Activated CD4-positive, alpha-beta T cell treated with anti-CD3 and anti-CD28 coated beads for 36 hours (primary cell): ENCODE measurements at regions of chr6 and their contacts with region 1.

Region 1: GRCh38 chr6:35894776-35895175 is 26.1 kb downstream of the SRPK1 start:
- DNase-seq: no peak
- ATAC-seq: no peak
- H3K4me3 Mint-ChIP-seq: no peak overlapping the region
- H3K27ac Mint-ChIP-seq: no peak overlapping the region
- H3K4me1 Mint-ChIP-seq: peaks cover 14% of the 10 kb centered on the region
- H3K27me3 Mint-ChIP-seq: no peaks in the 10 kb centered on the region

Region 2: GRCh38 chr6:35776364-35777215 is 118.2 kb before region 1 on chr6 and contains the start of gene CLPSL2:
- CTCF ChIA-PET with region 1: no interaction called
- POLR2A ChIA-PET with region 1: no interaction called
- intact Hi-C with region 1: no loop called
- DNase-seq: peak; percentile 18
- ATAC-seq: peak; percentile 33
- H3K4me3 Mint-ChIP-seq: peak within 1 kb of the TSS; percentile 9
- H3K27ac Mint-ChIP-seq: no peak within 1 kb of the TSS
- H3K4me1 Mint-ChIP-seq: peaks cover 5% of the 10 kb centered on the region
- H3K27me3 Mint-ChIP-seq: peaks cover 23% of the 10 kb centered on the region
- total RNA-seq, gene CLPSL2: not detected

Region 3: DNA sequence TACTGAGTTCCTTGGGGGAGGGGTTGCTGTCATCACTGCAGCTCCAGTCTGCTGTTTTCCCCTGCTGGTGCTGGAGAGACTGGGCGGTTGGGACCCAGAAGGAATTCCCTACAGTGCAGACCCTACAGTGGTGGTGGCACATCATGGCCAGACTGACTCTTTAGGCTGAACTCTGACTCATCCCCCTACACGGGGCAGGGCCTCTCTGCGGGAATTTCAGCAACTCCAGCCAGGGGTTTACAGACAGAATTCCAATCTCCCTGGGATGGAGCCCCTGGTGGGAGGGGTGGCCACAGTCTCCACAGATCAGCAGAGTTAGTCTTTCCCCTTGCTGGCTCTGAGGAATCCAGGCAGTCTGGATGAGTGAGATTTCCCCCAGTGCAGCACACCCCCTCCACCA is 188.7 kb after region 1 on chr6:
- CTCF ChIA-PET with region 1: no interaction called
- POLR2A ChIA-PET with region 1: interaction called, 10 read pairs
- intact Hi-C with region 1: no loop called
- DNase-seq: no peak
- ATAC-seq: no peak
- H3K4me3 Mint-ChIP-seq: no peak overlapping the region
- H3K27ac Mint-ChIP-seq: no peak overlapping the region
- H3K4me1 Mint-ChIP-seq: peaks cover 8% of the 10 kb centered on the region
- H3K27me3 Mint-ChIP-seq: no peaks in the 10 kb centered on the region